ENCODE measurements at regions of chr2 and their contacts with region 1.

Region 1: GRCh38 chr2:207769597-207770486 is at the start of gene FZD5:
- DNase-seq: peak; percentile 92 to 99 (median 98)

Region 2: GRCh38 chr2:207813221-207813916 is 43.5 kb after region 1 on chr2:
- intact Hi-C with region 1: loop called (anchors 5 kb)
- DNase-seq: peak; percentile 32 to 89 (median 74)

Region 3: GRCh38 chr2:207974216-207974605 is 204.4 kb after region 1 on chr2:
- intact Hi-C with region 1: loop called (anchors 10 kb)
- DNase-seq: no peak

Region 4: GRCh38 chr2:208025037-208025813 is 255.4 kb after region 1 on chr2 and contains the start of gene PLEKHM3:
- intact Hi-C with region 1: loop called (anchors 5 kb)
- DNase-seq: peak; percentile 80 to 96 (median 90)

Measured in head of caudate nucleus (tissue), 42 donors.